ENCODE measurements at regions of chr17 and their contacts with region 1.

Region 1: DNA sequence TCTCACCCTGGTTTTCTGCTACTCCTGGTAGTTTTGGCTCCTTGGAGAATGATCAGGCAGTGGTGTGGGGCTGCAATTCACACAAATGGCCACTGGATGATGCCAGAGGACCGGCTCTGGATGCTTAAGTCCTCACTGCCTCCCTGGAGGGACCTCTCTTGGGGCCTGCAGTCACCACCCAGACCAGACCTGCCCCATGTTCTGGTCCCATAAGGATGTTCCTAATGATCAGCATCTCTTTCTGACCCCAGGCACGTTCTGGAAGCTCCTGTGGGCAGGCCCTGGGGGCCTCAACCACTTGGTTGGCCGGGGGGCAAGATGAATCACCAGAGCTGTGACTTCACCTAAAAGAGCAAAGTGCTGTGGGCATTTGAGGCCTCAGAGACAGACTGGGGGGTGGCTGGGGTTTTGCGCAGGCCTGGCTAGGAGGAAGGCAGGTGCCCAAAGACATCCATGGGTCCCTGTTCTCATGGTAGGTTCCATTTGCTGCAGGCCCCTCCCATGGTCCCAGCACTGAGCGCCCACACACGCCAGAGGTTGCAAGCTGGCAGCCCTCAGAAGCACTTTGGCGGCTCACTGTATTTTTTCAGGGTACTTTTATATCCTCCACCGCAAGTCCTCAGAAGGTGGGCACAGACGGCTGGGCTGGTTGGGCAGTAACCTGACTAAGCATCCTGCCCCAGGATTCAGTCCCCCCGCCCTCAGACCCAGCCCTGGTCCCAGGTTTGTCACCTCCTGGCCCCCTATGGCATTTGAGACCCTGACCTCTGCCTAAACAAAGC is 53.2 kb downstream of the NT5M start:
- DNase-seq: peak; percentile 92
- H3K4me3 ChIP-seq: no peak overlapping the region
- H3K27ac ChIP-seq: no peak overlapping the region
- H3K4me1 ChIP-seq: no peaks in the 10 kb centered on the region
- H3K27me3 ChIP-seq: no peaks in the 10 kb centered on the region
- CTCF ChIP-seq: peak; percentile 98 to 100 (median 99)
- POLR2A ChIP-seq: no peak

Region 2: GRCh38 chr17:17641621-17642409 is 285.5 kb after region 1 on chr17:
- intact Hi-C with region 1: loop called (anchors 5 kb)
- DNase-seq: peak; percentile 78
- H3K4me3 ChIP-seq: no peak overlapping the region
- H3K27ac ChIP-seq: no peak overlapping the region
- H3K4me1 ChIP-seq: peaks cover 15% of the 10 kb centered on the region
- H3K27me3 ChIP-seq: no peaks in the 10 kb centered on the region
- CTCF ChIP-seq: peak; percentile 89 to 96 (median 92)
- POLR2A ChIP-seq: no peak

Region 3: DNA sequence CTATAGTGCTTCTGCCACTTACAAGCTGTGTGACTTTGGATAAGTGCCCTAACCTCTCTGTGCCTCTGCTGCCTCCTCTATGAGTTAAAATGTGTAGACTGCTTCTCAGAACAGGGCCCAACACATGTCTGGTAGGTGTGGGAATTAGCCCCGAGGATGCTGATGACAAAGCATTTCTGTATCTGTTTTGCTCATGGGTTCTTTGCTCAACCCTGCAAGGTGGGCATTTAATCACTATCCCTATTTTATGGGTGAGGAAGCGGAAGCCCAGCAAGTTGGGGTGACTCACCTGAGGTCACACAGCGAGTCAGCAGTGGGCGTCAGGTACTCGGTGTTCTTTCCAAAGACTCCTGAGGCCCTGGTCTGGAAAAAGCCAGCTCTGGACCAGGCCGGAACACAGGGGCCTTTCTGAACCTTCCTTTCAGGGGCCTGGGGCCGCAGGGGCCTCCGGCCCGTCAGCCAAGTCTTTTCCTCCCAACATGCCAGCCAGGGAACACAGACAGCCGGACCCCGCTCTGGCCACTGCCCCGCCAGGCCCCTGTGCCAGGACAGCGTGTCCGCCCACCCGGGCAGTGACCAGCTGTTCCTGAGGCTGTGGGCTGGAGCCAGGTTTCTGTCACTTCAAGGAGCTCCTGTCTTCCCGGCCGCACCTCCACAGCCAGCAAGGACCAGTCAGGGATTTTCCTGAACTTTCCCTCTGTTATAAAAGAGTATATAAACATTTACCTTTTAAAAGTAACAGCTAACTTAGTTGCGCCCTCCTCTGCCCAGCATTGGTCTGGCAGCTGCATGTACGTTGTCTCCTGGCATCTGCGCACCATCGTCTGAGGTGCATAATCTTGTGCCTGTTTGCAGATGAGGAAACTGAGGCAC is 417.9 kb after region 1 on chr17:
- intact Hi-C with region 1: no loop called
- DNase-seq: peak; percentile 61
- H3K4me3 ChIP-seq: no peak overlapping the region
- H3K27ac ChIP-seq: peak overlapping the region; percentile 40 to 73
- H3K4me1 ChIP-seq: peaks cover 38% of the 10 kb centered on the region
- H3K27me3 ChIP-seq: no peaks in the 10 kb centered on the region
- CTCF ChIP-seq: no peak
- POLR2A ChIP-seq: no peak

Measured in testis (tissue), 5 donors.